Left ventricle myocardium superior (tissue), 1 donor: ENCODE measurements at regions of chr17 and their contacts with region 1.

Region 1: DNA sequence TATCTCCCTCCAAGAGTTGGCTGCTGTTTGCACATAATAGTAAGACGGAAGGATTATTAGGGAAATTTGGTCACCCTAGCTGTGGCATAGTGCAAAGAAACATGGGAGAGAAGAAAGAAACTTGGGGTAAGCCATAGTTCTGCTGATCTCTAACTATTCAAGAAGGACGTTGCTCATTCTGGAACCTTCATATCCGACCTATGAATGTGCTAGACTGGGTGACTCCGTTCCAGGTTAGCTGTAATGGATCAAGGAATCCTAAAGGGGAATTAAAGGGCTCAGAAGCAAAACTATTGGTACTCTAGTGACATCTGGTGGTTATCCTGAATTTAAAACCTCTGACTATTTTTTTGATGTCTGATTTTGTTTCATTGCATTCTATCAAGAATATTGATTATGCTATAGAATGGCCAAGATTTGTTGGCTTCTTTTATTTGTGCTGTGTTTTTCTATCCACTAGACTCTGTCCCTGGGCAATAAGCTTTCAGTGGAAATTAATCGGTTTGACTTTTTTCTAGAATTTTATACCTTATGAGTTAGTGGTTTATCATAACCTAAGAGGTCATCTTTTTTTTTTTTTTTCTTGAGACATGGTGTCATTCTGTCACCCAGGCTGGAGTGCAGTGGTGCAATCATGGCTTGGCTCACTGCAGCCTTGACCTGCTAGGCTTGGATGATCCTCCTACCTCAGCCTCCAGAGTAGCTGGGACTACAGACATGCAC is 19.5 kb downstream of the PCTP start:
- DNase-seq: no peak
- ATAC-seq: peak; percentile 74

Region 2: DNA sequence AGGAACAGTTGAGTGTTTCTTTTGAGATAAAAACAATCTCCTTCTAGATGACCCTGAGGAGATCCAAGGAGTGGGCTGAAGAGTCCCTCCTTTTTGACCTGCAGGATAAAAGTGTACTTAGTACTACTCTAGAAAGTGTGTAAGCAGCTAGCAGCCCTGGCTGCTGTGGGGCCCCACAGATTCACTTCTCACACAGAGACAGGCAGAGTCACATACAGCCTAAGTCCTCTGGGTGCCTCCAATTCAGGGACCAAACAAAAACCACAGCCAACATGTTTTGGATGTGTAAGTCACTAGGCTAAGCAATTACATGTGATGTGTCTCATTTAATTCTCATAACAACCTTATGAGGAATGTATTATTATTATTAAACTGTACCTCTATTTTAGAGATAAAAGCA is 144.8 kb before region 1 on chr17:
- intact Hi-C with region 1: no loop called
- DNase-seq: no peak
- ATAC-seq: no peak

Region 3: GRCh38 chr17:55717898-55718735 is 52.2 kb before region 1 on chr17:
- intact Hi-C with region 1: loop called (anchors 5 kb)
- DNase-seq: peak; percentile 80
- ATAC-seq: peak; percentile 40

Region 4: GRCh38 chr17:55903028-55903690 is 132.8 kb after region 1 on chr17:
- intact Hi-C with region 1: no loop called
- DNase-seq: no peak
- ATAC-seq: no peak